OCI-LY7 (cell line): ENCODE measurements at regions of chr10 and their contacts with region 1.

Region 1: DNA sequence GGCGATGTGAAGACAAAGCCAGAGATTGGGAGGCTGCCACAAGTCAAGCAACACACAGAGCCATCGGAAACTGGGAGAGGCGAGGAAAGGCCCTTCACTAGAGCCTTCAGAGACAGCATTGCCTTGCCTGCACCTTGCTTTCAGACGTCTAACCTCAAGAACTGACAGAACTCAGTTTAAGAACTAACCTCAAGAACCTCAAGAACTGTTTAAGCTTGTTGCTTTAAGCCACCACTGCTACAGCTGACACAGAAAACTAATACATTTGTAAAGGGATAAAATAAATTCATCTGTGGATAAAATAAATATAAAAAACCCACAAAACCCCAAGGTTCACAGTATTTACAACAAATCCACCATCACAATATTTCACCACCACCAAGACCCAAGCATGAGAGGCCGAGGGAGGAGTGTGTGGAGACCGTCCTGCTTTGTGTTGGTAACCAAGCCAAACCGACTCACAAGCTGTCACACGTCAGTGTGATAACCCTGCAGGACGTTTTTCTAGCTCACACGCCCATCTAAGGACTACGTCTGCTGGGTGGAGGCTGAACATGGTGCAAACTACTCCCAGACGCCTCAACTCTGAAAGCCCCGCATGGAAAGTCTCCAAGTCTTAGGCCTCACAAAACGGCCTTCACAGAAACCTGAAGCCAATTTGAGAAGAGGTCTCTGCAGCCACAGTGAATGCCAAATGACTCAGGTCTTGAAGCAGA is 116.8 kb downstream of the ABLIM1 start:
- DNase-seq: peak; percentile 24
- H3K4me3 ChIP-seq: no peak overlapping the region
- H3K27ac ChIP-seq: peak overlapping the region; percentile 34
- H3K4me1 ChIP-seq: peaks cover 89% of the 10 kb centered on the region
- CTCF ChIP-seq: no peak

Region 2: GRCh38 chr10:114173921-114174694 is 367.1 kb before region 1 on chr10 and contains the start of gene CCDC186:
- CTCF ChIA-PET with region 1: no interaction called
- POLR2A ChIA-PET with region 1: interaction called, 4 read pairs
- intact Hi-C with region 1: loop called (anchors 5 kb)
- DNase-seq: peak; percentile 96
- H3K4me3 ChIP-seq: peak within 1 kb of the TSS; percentile 73
- H3K27ac ChIP-seq: no peak within 1 kb of the TSS
- H3K4me1 ChIP-seq: peaks cover 16% of the 10 kb centered on the region
- CTCF ChIP-seq: no peak
- total RNA-seq, gene CCDC186: 5.3 and 8.1 TPM in 2 replicates

Region 3: DNA sequence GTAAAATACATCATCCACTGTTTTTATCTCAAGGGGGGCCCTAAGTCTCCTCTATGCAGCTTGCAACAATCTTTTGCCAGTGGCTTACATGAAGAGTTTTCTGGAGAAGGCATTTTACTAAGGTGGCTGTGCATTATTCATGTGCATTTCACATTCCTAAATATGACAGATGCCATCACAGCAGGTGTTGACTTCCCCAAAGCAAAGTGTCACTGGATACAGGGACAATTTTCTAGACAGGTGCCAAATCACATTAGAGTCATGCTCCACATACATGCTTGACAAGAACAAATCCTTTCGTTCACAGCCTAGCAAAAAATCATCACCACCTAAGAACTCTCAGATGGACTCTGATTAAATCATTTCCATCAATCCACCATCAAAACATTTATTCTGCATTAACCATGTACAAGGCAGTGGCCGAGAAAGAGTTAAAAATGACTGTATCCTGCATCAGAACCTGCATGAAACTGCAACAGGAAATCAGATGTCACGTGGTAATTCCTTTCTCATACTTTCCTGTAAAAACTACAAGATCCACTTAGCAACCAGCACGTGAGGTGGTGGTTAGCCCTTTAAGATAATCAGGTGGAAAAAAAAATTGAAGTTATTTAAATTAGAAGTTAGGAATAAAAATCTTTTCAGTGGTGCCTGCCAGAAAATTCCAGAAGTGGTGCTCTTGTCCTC is 48.7 kb before region 1 on chr10:
- CTCF ChIA-PET with region 1: interaction called, 5 read pairs
- POLR2A ChIA-PET with region 1: interaction called, 114 read pairs
- intact Hi-C with region 1: no loop called
- DNase-seq: peak; percentile 78
- H3K4me3 ChIP-seq: peak overlapping the region; percentile 50
- H3K27ac ChIP-seq: peak overlapping the region; percentile 97
- H3K4me1 ChIP-seq: peaks cover 94% of the 10 kb centered on the region
- CTCF ChIP-seq: no peak

Region 4: DNA sequence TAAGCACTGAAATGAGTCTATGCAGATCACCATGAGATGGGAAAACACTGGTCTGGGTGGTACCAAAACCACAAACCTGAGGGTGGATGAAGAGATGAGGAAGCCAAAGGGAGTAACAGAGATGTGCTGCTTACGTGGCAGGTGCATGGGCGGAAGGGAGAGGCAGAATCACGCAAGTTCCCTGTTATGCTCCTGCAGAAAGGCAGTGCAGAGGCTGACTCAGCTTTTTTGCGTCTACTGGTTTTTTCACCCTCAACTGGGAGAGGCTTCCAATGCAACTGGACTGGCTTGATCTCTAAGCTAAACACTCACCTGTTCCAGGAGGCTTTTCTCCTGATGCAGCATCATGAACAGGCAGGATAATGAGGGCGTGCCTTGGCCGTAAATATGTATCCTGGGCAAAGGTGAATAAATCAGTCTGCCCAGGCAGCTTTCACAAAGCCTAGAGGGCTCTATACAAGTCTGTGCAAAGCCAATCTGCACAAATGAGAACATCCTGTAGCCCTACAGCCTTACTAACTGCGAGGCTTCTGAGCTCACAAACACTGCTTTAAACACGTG is 41.5 kb before region 1 on chr10:
- CTCF ChIA-PET with region 1: interaction called, 5 read pairs
- POLR2A ChIA-PET with region 1: interaction called, 114 read pairs
- intact Hi-C with region 1: loop called (anchors 1 kb)
- DNase-seq: peak; percentile 75
- H3K4me3 ChIP-seq: peak overlapping the region; percentile 49
- H3K27ac ChIP-seq: peak overlapping the region; percentile 97
- H3K4me1 ChIP-seq: peaks cover 92% of the 10 kb centered on the region
- CTCF ChIP-seq: no peak

Region 5: DNA sequence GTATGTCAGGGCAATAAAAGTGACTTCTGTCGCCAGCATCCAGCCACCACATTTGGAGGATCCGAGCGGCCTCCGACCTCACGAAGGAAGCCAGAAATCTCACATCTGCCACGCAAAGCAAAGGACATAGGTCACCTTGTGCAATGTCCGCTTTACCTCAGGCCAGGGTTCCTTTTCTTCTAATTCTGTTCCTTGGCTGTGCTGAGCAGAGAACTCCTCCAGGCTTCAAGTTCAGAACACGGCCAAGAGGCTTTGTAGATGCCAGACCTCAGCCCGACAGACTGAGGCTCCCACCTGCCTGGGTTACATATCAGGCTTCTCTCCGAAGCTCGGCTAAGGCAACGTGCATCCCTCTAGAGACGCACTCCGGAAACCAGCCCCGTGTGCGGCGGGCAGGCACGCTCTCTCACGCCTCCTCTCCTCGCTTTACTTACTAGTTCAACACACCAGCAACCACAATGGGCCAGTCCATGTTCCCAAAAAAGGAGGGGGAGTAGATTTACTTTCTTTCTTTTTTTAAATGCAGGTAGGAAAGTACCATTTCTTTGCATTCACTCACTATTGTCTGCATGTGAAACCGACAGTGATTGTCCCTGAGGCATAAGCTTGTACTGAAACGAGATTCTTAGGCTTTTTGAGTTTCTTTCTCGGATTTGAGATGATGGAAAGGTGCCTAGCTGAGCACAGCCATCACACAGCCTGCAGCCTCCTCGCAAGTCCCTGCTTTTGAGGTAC is 14.6 kb before region 1 on chr10:
- CTCF ChIA-PET with region 1: interaction called, 11 read pairs
- POLR2A ChIA-PET with region 1: interaction called, 192 read pairs
- intact Hi-C with region 1: loop called (anchors 1 kb)
- DNase-seq: peak; percentile 98
- H3K4me3 ChIP-seq: peak overlapping the region; percentile 89
- H3K27ac ChIP-seq: peak overlapping the region; percentile 91
- H3K4me1 ChIP-seq: peaks cover 35% of the 10 kb centered on the region
- CTCF ChIP-seq: no peak

Region 6: GRCh38 chr10:114565066-114565465 is 23.8 kb after region 1 on chr10:
- CTCF ChIA-PET with region 1: no interaction called
- POLR2A ChIA-PET with region 1: no interaction called
- intact Hi-C with region 1: no loop called
- DNase-seq: no peak
- H3K4me3 ChIP-seq: no peak overlapping the region
- H3K27ac ChIP-seq: no peak overlapping the region
- H3K4me1 ChIP-seq: no peaks in the 10 kb centered on the region
- CTCF ChIP-seq: no peak

Region 7: DNA sequence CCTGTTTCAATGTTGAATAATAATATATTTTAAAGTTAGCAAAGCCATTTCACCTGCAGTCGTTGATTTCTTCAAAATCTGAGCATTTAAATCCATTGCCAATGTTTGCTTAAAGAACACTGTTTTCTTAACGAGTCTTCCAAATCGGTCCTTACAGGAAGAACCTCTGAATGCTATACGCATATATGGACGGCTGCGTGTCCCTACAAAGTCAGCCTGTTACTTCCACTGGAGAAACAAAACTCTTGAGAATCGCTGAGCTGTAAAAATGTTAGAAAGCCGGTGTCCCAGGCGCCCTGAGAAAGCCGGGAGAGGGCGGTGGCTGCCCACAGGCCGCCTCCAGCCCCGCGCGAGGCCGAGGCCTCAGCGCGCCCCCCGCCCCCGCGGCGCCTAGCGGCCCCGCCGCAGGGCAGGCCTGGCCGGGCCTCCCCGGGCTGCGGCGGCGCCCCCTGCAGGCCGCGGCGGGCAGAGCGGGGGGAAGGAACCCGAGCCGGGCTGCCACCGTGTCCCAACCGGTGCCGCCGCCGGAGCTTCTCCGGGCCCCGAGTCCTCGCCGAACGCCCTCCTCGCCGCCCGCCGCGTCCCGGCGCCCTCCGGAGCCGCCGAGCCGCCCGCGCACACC is 280.2 kb after region 1 on chr10 and contains the start of gene FHIP2A:
- CTCF ChIA-PET with region 1: no interaction called
- POLR2A ChIA-PET with region 1: interaction called, 7 read pairs
- intact Hi-C with region 1: loop called (anchors 5 kb)
- DNase-seq: peak; percentile 88
- H3K4me3 ChIP-seq: peak within 1 kb of the TSS; percentile 80
- H3K27ac ChIP-seq: peak within 1 kb of the TSS; percentile 72
- H3K4me1 ChIP-seq: peaks cover 13% of the 10 kb centered on the region
- CTCF ChIP-seq: peak; percentile 51
- total RNA-seq, gene FHIP2A: 4.2 and 10.1 TPM in 2 replicates